Uterus (tissue), 4 donors: ENCODE measurements at regions of chr2 and their contacts with region 1.

Region 1: DNA sequence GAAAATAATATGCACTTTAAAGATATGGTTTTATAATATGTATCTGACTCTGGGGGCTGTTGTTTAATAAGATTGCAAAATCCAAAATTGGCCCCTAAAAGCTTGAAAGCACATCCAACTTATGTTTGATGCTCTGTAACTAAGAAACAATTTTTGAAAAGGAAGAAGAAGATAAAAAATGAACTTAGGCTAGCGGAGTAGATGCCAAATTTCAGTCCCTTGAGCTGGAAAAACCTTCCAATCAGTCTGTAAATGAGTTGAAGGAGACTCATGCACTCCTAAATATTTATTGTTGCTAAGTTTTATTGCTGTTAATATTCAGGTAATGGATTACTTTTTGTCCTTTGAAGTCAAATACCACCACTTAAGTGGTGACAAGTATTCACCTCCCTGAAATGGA is 465.0 kb downstream of the ZEB2 start:
- DNase-seq: no peak
- H3K4me3 ChIP-seq: no peak overlapping the region
- H3K27ac ChIP-seq: no peak overlapping the region
- H3K4me1 ChIP-seq: no peaks in the 10 kb centered on the region
- H3K27me3 ChIP-seq: no peaks in the 10 kb centered on the region
- CTCF ChIP-seq: no peak
- POLR2A ChIP-seq: no peak

Region 2: GRCh38 chr2:143807671-143808070 is 247.2 kb before region 1 on chr2:
- intact Hi-C with region 1: loop called (anchors 5 kb)
- DNase-seq: peak in 1 of 2 donors; percentile 20
- H3K4me3 ChIP-seq: no peak overlapping the region
- H3K27ac ChIP-seq: no peak overlapping the region
- H3K4me1 ChIP-seq: no peaks in the 10 kb centered on the region
- H3K27me3 ChIP-seq: no peaks in the 10 kb centered on the region
- CTCF ChIP-seq: no peak
- POLR2A ChIP-seq: no peak